ENCODE measurements at regions of chr12 and their contacts with region 1.

Region 1: DNA sequence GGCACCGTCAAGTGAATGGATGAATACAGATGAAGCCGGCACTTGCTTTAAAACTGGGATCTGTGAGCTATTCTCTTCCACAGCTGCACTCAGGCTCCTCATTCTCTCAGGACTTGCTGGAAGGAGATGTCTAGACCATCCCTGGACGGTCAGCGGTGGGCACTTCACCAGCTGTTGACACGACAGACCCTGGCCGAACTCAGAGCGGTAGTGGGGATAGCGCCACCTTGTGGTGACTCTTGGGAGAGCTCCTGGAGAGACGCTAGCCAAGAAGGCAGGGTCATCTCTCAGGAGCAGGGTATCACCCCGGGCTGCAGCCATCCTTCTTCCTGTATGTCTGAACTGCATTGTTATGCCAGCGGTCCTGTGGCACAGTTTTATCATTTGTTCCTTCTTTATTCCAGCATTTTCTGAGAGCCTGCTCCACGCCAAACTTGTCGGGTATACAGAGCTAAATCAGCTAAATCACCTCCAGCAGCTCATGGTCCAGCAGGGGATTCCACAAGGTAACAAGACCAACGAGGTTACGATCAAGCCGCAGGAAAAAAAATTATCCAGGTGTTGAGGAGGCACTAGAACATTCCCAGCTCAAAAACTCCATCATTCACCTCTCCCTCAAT is 10.0 kb downstream of the WNT1 start:
- DNase-seq: peak; percentile 80
- CTCF ChIP-seq: peak; percentile 85

Region 2: GRCh38 chr12:48681738-48682532 is 306.2 kb before region 1 on chr12 and contains the start of gene KANSL2:
- CTCF ChIA-PET with region 1: no interaction called
- POLR2A ChIA-PET with region 1: no interaction called
- DNase-seq: peak; percentile 99
- CTCF ChIP-seq: no peak

Region 3: GRCh38 chr12:48691826-48692487 is 296.2 kb before region 1 on chr12:
- CTCF ChIA-PET with region 1: no interaction called
- POLR2A ChIA-PET with region 1: no interaction called
- DNase-seq: no peak
- CTCF ChIP-seq: no peak

Region 4: DNA sequence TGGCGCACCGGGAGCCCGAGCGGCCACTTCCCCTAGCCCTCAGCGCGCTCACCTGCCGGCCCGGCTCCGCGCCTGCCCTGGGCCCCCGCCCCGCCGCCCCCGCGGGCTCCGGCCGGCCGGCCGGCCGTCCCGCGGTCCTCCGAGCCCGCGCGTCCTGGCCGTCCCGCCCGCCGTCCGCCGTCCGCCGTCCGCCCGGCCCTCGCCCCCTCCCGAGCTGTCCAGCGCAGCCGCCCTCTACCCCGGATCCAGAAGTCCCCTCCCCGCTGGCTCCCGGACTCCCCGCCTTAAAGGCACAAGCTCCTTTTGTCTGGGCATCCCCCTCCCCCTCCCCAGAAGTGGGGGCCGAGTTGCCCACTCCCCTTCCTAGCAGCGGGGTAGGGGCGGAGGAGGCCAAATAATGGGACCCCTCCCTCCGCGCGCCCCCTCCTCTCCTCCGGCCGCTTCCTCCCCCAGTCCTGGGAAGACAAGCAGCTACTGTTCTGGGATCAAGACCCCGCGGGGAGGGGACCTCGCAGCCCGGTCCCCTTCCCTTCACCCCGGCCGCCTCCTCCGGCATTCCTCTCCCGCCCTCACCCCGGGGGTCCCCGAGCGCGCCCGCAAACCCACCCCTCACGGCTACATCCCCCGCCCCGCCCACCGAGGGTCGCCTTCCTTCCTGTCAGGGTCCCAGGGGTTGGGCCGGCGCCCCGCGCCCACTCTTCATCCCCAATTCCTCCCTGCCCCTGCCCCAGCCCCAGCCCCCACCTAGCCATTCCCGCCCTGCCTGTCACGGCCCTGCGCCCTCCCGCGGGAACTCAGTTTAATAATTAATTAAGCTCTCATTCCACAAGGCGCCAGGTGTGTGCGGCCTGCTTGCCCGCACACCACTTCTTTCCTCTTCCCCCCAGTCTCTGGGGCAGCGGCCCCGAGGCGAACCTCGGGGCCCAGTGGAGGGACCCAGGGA is 199.0 kb before region 1 on chr12 and contains the start of gene ADCY6:
- CTCF ChIA-PET with region 1: no interaction called
- POLR2A ChIA-PET with region 1: no interaction called
- DNase-seq: peak; percentile 68
- CTCF ChIP-seq: no peak

Region 5: DNA sequence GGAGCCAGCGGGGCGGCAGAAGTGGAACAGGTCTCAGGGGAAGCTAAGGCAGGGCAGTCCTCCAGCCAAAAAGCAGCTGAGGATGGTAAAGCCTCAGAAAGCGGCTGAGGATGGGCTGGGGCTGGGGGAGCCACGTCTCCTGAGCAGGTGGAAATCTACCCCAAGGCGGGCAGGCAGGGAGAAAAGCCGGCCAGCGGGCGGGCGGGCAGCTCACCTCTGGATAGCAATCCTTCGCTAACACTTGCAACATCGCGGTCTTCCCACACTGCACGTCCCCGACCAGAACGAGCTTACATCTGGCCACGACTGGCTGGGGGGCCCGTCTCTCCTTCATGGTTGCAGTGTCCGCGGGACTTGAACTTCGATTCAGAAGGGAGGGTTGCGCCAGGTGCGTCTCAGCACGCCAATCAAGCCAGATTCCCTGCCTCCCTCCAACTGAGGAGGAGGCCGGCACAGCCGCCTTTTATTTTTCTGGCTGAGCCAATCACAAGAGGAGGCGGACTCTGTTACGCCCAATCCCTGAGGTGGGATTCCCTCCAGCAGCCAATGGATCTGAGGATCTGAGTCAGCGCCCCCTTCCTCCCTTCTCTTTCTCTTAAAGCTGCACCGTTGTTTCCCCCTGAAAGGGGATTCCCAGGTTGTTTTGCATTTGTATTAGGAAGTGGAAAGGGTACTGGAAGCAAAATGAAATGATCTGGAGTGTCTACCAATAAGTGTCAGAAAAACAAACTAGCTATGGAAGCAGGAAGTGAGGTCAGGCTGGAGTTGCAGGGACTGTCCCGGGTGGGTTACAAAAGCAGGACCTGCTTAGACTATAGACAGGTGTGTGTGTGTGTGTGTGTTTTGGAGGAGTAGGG is 122.5 kb before region 1 on chr12 and contains the start of gene RND1:
- CTCF ChIA-PET with region 1: interaction called, 11 read pairs
- POLR2A ChIA-PET with region 1: no interaction called
- DNase-seq: peak; percentile 93
- CTCF ChIP-seq: no peak

Region 6: GRCh38 chr12:48903982-48904411 is 84.1 kb before region 1 on chr12:
- CTCF ChIA-PET with region 1: interaction called, 15 read pairs
- POLR2A ChIA-PET with region 1: no interaction called
- DNase-seq: peak; percentile 80
- CTCF ChIP-seq: peak; percentile 70

Region 7: GRCh38 chr12:48936379-48936979 is 51.7 kb before region 1 on chr12:
- CTCF ChIA-PET with region 1: interaction called, 14 read pairs
- POLR2A ChIA-PET with region 1: no interaction called
- DNase-seq: peak; percentile 85
- CTCF ChIP-seq: peak; percentile 92

Region 8: DNA sequence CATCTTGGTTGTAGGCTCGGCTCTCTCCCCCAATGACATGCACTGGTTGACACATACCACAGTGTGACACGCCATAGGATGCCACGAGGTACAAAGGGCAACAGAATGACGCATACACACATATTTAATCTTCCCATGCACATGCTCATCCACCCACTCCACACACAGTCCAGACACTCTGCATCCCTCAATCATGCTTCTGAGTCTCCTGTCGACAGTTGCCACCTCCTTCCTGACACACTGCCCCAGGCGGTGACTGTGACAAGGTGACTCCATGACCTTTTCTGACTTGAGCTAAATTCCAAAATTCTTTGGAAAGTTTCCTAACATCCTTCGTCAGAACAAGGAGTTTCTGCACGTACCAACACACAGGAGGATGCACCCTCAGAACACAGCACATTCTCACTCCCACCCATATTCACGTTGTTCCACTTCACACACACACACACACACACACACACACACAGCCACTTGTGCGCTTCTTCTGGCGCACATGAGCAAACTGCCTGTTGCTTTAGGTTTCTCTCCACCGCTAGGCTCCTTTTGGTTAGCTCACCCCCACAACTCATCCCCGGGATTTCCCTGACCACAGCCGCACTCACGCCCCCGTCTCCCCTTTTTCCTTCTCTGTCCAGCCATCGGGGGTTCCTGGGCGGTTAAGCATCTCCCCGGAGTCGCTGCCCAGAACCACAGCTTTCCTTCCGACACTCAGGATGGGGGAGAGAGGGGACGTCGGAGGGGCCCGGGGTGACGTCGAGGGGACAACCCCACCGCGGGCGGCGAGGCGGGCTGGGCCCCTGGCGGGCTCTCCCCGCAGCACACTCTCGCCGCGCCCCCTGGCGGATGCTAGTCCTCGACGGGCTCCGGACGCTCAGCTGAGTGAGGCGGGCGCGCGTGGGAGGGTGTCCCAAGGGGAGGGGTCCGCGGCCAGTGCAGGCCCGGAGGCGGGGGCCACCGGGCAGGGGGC is 10.5 kb before region 1 on chr12:
- CTCF ChIA-PET with region 1: interaction called, 417 read pairs
- POLR2A ChIA-PET with region 1: no interaction called
- DNase-seq: peak; percentile 87
- CTCF ChIP-seq: peak; percentile 72

Region 9: GRCh38 chr12:49031553-49032162 is 43.5 kb after region 1 on chr12:
- CTCF ChIA-PET with region 1: interaction called, 10 read pairs
- POLR2A ChIA-PET with region 1: no interaction called
- DNase-seq: no peak
- CTCF ChIP-seq: no peak

Region 10: GRCh38 chr12:49161092-49161795 is 173.1 kb after region 1 on chr12:
- CTCF ChIA-PET with region 1: no interaction called
- POLR2A ChIA-PET with region 1: no interaction called
- DNase-seq: no peak
- CTCF ChIP-seq: no peak